Calu3 (cell line): ENCODE measurements at regions of chr7 and their contacts with region 1.

Region 1: GRCh38 chr7:32500922-32501341 is 5.6 kb downstream of the AVL9 start:
- DNase-seq: no peak
- H3K4me3 Mint-ChIP-seq: peak overlapping the region; percentile 17
- H3K27ac Mint-ChIP-seq: peak overlapping the region; percentile 12
- H3K4me1 Mint-ChIP-seq: peaks cover 20% of the 10 kb centered on the region
- H3K27me3 Mint-ChIP-seq: no peaks in the 10 kb centered on the region
- CTCF ChIP-seq: no peak

Region 2: DNA sequence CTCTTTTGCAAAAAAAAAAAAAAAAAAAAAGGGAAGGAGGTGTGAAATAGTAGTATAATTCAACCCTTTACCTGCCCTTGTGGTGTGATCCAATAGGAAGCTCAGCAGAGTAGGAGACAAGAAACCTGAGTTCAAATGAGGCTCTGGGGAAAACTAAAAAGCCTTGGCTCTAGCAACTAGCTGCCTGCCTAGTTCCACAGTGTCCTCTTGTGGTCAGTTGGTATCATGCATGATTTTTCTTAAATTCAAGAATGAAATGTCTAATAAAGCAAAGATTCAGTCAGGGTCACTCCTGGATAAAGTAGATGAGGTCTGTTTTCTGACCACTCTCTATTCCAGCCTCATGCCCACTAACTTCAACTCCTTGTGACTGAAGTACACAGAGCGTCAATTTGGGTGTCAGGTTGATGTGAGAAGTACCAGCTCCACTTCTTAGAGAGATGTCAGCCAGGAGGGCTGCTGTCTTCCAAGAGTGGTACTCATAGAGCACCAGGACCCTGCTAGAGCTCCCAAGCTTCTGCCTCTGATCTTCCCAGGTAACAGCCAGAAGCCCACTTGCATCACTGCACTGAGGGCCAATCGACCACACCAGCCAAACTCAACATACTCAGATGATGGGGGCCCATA is 21.2 kb before region 1 on chr7:
- CTCF ChIA-PET with region 1: no interaction called
- intact Hi-C with region 1: no loop called
- DNase-seq: peak; percentile 52
- H3K4me3 Mint-ChIP-seq: no peak overlapping the region
- H3K27ac Mint-ChIP-seq: no peak overlapping the region
- H3K4me1 Mint-ChIP-seq: no peaks in the 10 kb centered on the region
- H3K27me3 Mint-ChIP-seq: peaks cover 43% of the 10 kb centered on the region
- CTCF ChIP-seq: peak; percentile 86

Region 3: GRCh38 chr7:32536585-32536984 is 35.7 kb after region 1 on chr7:
- CTCF ChIA-PET with region 1: no interaction called
- intact Hi-C with region 1: loop called (anchors 2 kb)
- DNase-seq: peak; percentile 36
- H3K4me3 Mint-ChIP-seq: peak overlapping the region; percentile 2
- H3K27ac Mint-ChIP-seq: peak overlapping the region; percentile 38
- H3K4me1 Mint-ChIP-seq: peaks cover 32% of the 10 kb centered on the region
- H3K27me3 Mint-ChIP-seq: no peaks in the 10 kb centered on the region
- CTCF ChIP-seq: no peak

Region 4: DNA sequence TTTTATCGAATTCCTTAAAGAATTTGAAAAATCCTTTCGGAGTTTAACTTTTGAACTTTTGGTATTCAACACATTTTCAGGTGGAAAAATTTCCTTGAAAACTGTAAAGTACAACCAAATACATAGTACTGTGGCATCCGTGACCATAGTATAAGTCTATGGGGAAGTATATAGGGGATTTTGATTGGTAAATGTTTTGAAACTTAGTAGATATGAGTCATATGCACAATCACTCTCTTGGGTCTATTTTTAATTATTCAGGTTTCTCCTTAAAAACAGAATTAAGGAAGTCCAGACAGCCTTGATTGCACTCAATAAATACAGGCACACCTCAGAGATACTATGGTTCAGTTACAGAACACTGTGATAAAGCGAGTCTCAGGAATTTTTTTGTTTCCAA is 58.5 kb after region 1 on chr7:
- CTCF ChIA-PET with region 1: no interaction called
- intact Hi-C with region 1: loop called (anchors 5 kb)
- DNase-seq: no peak
- H3K4me3 Mint-ChIP-seq: no peak overlapping the region
- H3K27ac Mint-ChIP-seq: no peak overlapping the region
- H3K4me1 Mint-ChIP-seq: peaks cover 7% of the 10 kb centered on the region
- H3K27me3 Mint-ChIP-seq: no peaks in the 10 kb centered on the region
- CTCF ChIP-seq: no peak

Region 5: GRCh38 chr7:32694182-32694581 is 193.2 kb after region 1 on chr7:
- CTCF ChIA-PET with region 1: no interaction called
- intact Hi-C with region 1: no loop called
- DNase-seq: no peak
- H3K4me3 Mint-ChIP-seq: no peak overlapping the region
- H3K27ac Mint-ChIP-seq: no peak overlapping the region
- H3K4me1 Mint-ChIP-seq: peaks cover 22% of the 10 kb centered on the region
- H3K27me3 Mint-ChIP-seq: no peaks in the 10 kb centered on the region
- CTCF ChIP-seq: no peak